Prostate gland (tissue), 2 donors: ENCODE measurements at regions of chr4 and their contacts with region 1.

Region 1: GRCh38 chr4:75916091-75916661 is 13.9 kb upstream of the PPEF2 start:
- DNase-seq: no peak
- H3K4me3 ChIP-seq: no peak overlapping the region
- H3K27ac ChIP-seq: peak overlapping the region; percentile 20 to 62
- H3K4me1 ChIP-seq: peaks cover 4% of the 10 kb centered on the region
- H3K27me3 ChIP-seq: no peaks in the 10 kb centered on the region
- CTCF ChIP-seq: peak; percentile 38 to 64 (median 55)
- POLR2A ChIP-seq: no peak

Region 2: DNA sequence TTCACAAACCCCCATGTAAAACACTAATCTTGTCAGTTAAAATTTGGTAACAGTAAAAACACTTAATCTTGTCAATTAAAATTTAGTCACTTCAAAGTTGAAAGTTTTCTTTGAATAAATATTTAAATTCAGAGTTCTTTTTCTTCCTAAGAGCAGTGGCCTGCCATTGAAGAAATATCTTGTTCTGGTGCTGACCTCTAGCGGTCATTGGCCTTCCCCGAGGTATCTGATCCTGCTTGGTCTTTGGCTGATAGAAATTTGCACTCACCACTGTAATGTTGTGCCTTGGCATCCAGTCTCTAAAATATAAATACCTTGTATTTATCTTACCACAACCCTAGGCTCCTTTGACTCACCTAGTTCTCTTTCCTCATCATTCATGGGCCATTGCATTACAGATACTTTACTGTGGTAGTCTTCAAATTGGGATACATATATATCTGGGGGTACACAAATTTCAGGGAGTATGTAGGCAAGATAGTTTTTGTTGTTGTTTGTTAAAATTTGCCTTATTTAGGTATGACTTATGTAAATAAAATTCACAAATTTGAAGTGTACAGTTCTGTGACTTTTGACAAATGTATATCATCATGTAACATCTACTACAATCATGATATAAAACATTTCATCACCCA is 151.6 kb after region 1 on chr4:
- intact Hi-C with region 1: loop called (anchors 10 kb)
- DNase-seq: peak; percentile 79
- H3K4me3 ChIP-seq: no peak overlapping the region
- H3K27ac ChIP-seq: no peak overlapping the region
- H3K4me1 ChIP-seq: no peaks in the 10 kb centered on the region
- H3K27me3 ChIP-seq: no peaks in the 10 kb centered on the region
- CTCF ChIP-seq: peak; percentile 63 to 83 (median 74)
- POLR2A ChIP-seq: no peak